ENCODE measurements at regions of chr16 and their contacts with region 1.

Region 1: DNA sequence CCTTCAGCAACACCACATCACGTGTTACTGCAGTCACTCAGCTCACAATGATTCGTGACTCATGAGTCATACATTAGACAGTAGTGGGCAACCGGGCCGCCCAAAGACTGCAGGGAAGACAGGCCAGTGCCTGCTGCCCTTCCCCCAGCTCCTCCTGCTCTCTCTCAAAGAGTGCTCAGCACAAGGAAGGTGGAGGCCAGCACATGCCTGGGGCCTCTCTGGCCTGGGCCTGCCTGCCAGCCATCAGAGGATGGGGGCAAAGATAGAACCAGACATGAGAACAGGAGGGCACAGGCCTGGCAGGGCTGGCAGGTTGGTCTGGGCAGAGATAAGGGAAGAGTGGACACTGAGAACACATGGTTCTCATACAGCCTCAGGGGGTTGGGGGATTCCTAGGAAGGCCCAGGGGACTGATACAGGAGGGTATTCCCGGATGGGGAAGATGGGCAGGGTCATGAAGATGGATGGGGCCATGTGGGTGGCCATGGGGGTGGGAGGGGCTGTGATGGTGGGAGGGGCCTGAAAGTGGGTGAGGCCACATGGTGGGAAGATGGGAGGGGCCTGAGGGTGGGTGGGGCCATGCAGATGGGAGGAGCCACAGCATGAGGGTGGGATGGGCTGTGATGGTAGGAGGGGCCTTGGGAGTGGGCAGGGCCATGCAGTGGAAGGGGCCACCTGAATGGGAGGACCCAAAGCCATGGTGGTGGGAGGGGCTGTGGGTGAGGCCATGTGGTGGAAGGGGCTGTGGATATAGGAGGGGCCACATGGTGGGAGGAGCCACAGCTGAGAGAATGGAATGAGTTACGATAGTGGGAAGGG is 29.0 kb downstream of the KATNB1 start:
- DNase-seq: no peak

Region 2: DNA sequence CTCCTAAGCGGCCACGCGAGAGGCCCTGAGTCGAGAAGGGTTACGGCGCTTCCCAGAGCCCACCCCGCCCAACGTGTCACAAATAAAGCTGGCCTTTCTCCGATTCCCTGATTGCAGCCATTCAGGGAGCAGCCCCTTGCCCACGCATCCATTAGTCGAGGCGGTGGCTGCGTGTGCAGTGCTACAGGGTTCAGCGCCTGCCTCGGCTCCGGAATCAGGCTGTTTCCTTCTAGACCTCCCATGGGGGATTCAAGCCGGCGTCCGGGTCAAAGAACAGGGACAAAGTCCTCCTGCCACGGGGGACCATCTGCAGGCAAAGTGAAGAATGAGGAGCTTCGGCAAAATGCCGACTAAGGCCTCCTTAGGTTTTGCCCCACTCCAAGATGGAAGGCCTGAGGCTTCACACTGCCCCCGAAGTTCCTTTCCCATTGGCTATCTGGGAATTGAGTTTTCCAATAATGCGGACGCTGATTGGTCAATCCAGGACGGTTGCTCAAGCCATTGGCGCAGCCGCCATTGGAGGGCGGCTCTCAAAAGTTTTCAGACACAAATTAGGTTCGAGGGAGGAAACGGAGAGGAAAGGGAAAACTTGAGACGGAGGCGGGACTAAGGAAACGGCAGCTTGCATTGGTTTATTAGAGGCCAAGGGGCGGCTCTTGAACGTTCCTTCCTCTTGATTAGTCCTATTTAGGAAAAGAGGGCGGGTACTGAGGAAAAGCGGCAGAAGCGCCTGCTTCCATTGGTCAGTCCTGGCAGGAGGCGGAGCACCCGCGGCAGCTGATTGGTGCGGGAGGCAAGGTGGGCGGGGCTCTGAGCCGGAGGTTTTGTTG is 29.4 kb before region 1 on chr16:
- intact Hi-C with region 1: no loop called
- DNase-seq: peak; percentile 99

Region 3: GRCh38 chr16:57994778-57995177 is 230.2 kb after region 1 on chr16:
- intact Hi-C with region 1: loop called in 1 of 2 experiments (anchors 10 kb)
- DNase-seq: no peak

Measured in posterior vena cava (tissue), 2 donors.